ENCODE measurements at regions of chr2 and their contacts with region 1.

Region 1: DNA sequence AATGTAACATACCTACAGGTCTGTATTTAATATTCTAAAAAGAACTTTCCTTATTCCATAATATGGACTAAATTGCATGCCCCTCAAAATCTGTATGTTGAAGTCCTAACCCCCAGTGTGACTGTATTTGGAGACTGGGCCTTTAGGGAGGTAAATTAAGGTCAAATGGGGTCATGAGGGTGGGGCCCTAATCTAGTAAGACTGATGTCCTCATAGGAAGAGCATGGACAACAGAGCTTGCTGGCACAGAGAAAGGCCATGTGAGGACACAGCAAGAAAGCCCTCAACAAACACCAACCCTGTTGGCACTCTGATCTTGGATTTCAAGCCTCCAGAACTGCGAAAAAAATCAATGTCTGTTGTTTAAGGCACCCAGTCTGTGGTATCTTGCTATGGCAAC is 18.6 kb downstream of the SF3B1 start:
- DNase-seq: no peak
- ATAC-seq: no peak
- H3K4me3 ChIP-seq: no peak overlapping the region
- H3K27ac ChIP-seq: no peak overlapping the region
- H3K4me1 ChIP-seq: no peaks in the 10 kb centered on the region
- H3K27me3 ChIP-seq: no peaks in the 10 kb centered on the region

Region 2: DNA sequence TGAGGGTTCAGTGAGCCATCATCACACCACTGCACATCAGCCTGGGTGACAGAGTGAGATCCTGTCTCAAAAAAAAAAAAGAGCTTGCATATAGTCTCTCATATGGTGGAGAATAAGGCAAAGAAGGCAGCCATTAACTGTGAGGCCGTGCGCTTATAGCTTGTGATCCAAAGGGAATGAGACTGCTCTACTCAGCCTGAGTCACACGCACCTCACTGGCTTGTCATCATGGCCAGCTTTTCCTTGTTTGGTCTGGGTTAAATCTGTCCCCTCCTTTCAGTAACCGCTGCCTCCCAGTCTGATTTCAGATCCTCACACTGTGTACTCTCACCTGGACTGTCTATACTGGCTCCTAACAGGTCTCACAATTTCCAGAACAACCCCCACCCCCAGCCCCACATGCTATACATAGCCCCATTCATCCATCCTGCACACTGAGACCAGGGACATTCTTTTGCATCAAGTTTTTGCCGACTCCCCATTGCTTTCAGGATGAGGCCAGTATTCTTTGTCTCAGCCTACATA is 70.4 kb before region 1 on chr2:
- intact Hi-C with region 1: no loop called
- DNase-seq: no peak
- ATAC-seq: no peak
- H3K4me3 ChIP-seq: no peak overlapping the region
- H3K27ac ChIP-seq: no peak overlapping the region
- H3K4me1 ChIP-seq: no peaks in the 10 kb centered on the region
- H3K27me3 ChIP-seq: no peaks in the 10 kb centered on the region

Region 3: DNA sequence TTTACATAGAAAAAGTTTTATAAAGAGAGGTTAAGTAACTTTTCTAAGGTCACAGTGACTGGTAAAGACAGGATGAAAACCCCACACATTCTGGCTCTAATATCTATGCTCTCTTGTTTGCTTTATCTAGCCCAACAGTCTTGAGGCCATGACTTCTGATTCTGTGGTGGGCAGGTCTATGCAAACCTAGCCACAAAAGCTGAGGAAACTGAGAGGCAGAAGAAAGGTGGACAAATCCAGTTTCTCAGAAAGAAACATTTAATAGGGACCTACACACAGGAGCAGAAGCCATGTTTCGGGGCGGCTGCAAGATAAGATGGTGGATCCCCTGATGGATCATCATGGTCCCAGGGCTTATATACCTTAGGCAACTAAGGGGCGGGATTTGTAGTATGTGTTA is 61.5 kb after region 1 on chr2:
- intact Hi-C with region 1: loop called in 1 of 2 experiments (anchors 10 kb)
- DNase-seq: no peak
- ATAC-seq: no peak
- H3K4me3 ChIP-seq: no peak overlapping the region
- H3K27ac ChIP-seq: no peak overlapping the region
- H3K4me1 ChIP-seq: no peaks in the 10 kb centered on the region
- H3K27me3 ChIP-seq: no peaks in the 10 kb centered on the region

Measured in aorta (tissue), 5 donors.